ENCODE measurements at regions of chr3 and their contacts with region 1.

Region 1: DNA sequence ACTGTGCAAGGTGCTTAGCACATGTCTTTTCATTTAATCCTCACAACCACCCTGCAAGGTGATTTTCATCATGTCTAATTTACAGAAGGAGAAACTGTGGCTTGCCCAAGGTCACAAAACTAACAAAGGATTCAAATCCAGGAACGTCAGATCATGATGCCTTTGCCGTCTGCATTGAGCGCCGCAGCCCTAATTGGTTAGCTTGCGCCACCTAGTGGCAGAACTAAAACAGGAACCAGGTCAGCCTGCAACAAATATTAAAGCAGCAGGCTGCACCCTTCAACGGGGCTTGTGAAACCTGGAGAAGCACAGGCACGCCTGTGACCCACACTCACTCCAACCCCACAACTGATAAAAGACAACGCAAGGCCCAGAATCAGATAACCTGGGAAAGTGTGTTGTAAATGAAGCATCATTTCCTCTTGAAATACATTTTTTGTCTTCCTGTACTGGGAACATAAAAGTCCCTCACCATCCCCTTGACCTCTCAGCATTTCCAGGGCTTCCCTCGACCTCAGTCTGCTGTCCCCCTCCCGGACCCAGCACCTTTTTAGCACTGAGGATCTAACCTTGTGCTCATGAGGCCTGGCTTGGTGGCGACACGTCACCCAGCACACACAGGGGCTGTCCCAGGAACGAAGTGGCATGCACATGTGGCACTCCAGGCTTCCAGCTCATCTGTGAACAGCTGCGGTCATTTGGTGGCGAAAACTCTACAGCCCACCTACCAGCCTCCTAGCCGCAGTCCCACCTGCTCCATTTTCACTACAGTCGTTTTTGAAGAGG is 17.3 kb downstream of the DPH3 start:
- DNase-seq: peak; percentile 74 to 90 (median 79)
- ATAC-seq: peak; percentile 95
- H3K4me3 ChIP-seq: no peak overlapping the region
- H3K27ac ChIP-seq: no peak overlapping the region
- H3K4me1 ChIP-seq: peaks cover 3 to 4% of the 10 kb centered on the region in 2 experiments; a peak in 2 of 5 replicates
- H3K27me3 ChIP-seq: peaks cover 21 to 39% of the 10 kb centered on the region in 2 experiments
- CTCF ChIP-seq: peak; percentile 92 to 99 (median 96)
- EP300 ChIP-seq: no peak
- POLR2A ChIP-seq: no peak
- RAD21 ChIP-seq: peak; percentile 94 to 95

Region 2: GRCh38 chr3:15815696-15816095 is 431.8 kb before region 1 on chr3:
- CTCF ChIA-PET with region 1: interaction called, 8 read pairs
- POLR2A ChIA-PET with region 1: no interaction called
- in situ Hi-C with region 1: loop called (anchors 5 kb)
- intact Hi-C with region 1: loop called (anchors 1 kb)
- DNase-seq: peak in 1 of 4 experiments; percentile 34
- ATAC-seq: peak; percentile 43; the same call in 1 of the 3 replicates
- H3K4me3 ChIP-seq: no peak overlapping the region
- H3K27ac ChIP-seq: no peak overlapping the region
- H3K4me1 ChIP-seq: no peaks in the 10 kb centered on the region
- H3K27me3 ChIP-seq: no peaks in the 10 kb centered on the region
- CTCF ChIP-seq: peak in 1 of 3 experiments; percentile 59; a peak in 2 of 6 replicates
- EP300 ChIP-seq: no peak
- POLR2A ChIP-seq: no peak
- RAD21 ChIP-seq: peak; percentile 64 to 82

Region 3: DNA sequence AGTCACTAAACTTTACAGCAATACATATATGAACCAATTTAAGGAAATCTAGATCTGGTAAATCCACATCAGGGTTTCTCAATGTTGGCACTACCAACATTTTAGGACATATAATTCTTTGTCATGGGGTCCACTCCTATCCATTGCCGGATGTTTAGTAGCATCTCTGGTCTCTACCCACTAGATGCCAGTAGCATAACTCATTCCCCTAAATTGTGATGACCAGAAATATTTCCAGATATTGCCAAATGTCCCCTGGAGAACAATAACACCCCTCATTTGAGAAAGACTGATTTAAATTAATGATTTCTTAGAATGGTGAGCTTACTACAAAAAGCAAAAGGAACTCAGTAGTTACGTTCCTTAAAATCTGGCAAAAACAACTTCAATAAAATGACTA is 426.6 kb before region 1 on chr3:
- CTCF ChIA-PET with region 1: interaction called, 8 read pairs
- POLR2A ChIA-PET with region 1: no interaction called
- in situ Hi-C with region 1: loop called (anchors 5 kb)
- intact Hi-C with region 1: no loop called
- DNase-seq: no peak
- ATAC-seq: no peak
- H3K4me3 ChIP-seq: no peak overlapping the region
- H3K27ac ChIP-seq: no peak overlapping the region
- H3K4me1 ChIP-seq: peaks cover 0 to 3% of the 10 kb centered on the region in 2 experiments; a peak in 2 of 5 replicates
- H3K27me3 ChIP-seq: no peaks in the 10 kb centered on the region
- CTCF ChIP-seq: no peak
- EP300 ChIP-seq: no peak
- POLR2A ChIP-seq: no peak
- RAD21 ChIP-seq: no peak

Region 4: GRCh38 chr3:16048435-16049318 is 198.8 kb before region 1 on chr3:
- CTCF ChIA-PET with region 1: interaction called, 31 read pairs
- POLR2A ChIA-PET with region 1: no interaction called
- in situ Hi-C with region 1: loop called (anchors 10 kb)
- intact Hi-C with region 1: loop called (anchors 1 kb)
- DNase-seq: peak; percentile 70 to 75 (median 74)
- ATAC-seq: peak; percentile 99
- H3K4me3 ChIP-seq: no peak overlapping the region
- H3K27ac ChIP-seq: no peak overlapping the region
- H3K4me1 ChIP-seq: no peaks in the 10 kb centered on the region
- H3K27me3 ChIP-seq: peaks cover 0 to 11% of the 10 kb centered on the region in 2 experiments; a peak in 2 of 5 replicates
- CTCF ChIP-seq: peak; percentile 82 to 89 (median 84)
- EP300 ChIP-seq: no peak
- POLR2A ChIP-seq: no peak
- RAD21 ChIP-seq: peak; percentile 94 to 95

Region 5: GRCh38 chr3:16177962-16178627 is 69.4 kb before region 1 on chr3:
- CTCF ChIA-PET with region 1: interaction called, 6 read pairs
- POLR2A ChIA-PET with region 1: interaction called, 3 read pairs
- in situ Hi-C with region 1: no loop called
- intact Hi-C with region 1: loop called (anchors 2 kb)
- DNase-seq: peak; percentile 74 to 90 (median 82)
- ATAC-seq: peak; percentile 97
- H3K4me3 ChIP-seq: no peak overlapping the region
- H3K27ac ChIP-seq: no peak overlapping the region
- H3K4me1 ChIP-seq: peaks cover 0 to 5% of the 10 kb centered on the region in 2 experiments; a peak in 1 of 5 replicates
- H3K27me3 ChIP-seq: peaks cover 17 to 55% of the 10 kb centered on the region in 2 experiments
- CTCF ChIP-seq: peak; percentile 94 to 97 (median 96)
- EP300 ChIP-seq: no peak
- POLR2A ChIP-seq: no peak
- RAD21 ChIP-seq: peak; percentile 94